ENCODE measurements at regions of chr2 and their contacts with region 1.

Region 1: GRCh38 chr2:186862869-186863709 is 14.1 kb upstream of the ZSWIM2 start:
- DNase-seq: peak; percentile 13
- CTCF ChIP-seq: peak; percentile 60

Region 2: DNA sequence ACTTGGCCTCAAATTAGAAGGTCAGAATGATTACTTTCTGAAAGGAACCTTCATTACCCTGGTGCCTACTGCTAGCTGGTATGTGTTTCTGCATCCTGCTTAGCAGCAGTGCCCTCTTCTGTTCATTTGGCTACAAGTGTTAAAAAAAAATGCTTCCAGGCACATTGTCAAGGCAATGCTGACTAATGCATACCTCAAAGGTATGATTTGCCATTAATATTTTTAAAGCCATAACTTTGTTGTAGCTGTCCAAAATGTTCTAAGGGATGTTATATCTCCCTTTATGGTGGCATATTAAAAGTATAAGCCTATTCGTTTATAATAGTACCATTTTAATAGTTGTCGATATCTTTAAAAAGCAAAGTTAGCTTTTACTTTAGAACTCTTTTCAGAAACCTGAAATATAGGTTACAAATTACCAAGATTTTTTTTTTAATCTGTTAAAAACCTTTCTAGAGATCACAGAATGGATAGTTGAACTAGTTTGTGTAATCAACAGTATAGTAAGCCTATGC is 221.2 kb before region 1 on chr2:
- CTCF ChIA-PET with region 1: no interaction called
- POLR2A ChIA-PET with region 1: no interaction called
- DNase-seq: peak; percentile 46
- CTCF ChIP-seq: peak; percentile 71

Region 3: DNA sequence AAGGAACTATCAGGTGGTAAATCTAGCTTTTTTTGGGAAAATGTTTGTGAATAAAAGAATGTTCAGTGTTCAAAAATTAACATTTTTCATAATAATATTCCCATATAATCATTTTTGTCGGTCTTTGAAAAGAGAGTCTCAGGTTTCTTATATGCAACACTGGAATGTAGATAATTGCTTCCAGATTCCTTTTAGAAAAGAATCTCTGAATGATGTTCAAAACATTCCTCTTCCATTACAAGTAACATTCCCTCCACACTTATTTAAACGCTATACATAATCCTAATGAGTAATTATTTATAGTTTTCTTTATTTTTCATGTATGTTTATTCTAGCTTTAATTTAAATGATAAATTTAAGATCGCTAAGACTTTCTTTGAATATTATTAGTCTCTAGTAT is 21.1 kb before region 1 on chr2:
- CTCF ChIA-PET with region 1: no interaction called
- POLR2A ChIA-PET with region 1: no interaction called
- DNase-seq: no peak
- CTCF ChIP-seq: no peak

Region 4: DNA sequence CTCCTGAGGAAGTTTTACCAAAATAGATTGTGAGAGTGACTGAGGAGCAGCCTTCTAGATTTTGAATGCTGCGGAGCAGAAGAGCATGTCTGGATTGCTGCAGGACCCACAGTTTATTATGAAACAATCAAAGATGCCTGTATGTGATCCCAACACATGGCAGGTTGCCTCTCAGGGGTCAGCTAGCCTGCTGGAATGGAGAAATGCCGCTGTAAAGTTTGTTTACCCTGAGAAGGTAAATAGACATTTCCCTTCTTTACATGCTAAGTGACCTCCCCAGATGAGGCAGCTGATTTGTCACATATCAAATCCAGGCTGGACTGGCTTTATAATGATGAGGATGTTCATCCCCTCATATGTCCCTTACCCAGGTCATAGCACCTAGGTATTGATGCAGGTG is 88.9 kb after region 1 on chr2:
- CTCF ChIA-PET with region 1: no interaction called
- POLR2A ChIA-PET with region 1: no interaction called
- DNase-seq: no peak
- CTCF ChIP-seq: no peak

Region 5: GRCh38 chr2:187447336-187447735 is 584.2 kb after region 1 on chr2:
- CTCF ChIA-PET with region 1: interaction called, 11 read pairs
- POLR2A ChIA-PET with region 1: no interaction called
- DNase-seq: no peak
- CTCF ChIP-seq: no peak